T-cell (primary cell): ENCODE measurements at regions of chr9 and their contacts with region 1.

Region 1: DNA sequence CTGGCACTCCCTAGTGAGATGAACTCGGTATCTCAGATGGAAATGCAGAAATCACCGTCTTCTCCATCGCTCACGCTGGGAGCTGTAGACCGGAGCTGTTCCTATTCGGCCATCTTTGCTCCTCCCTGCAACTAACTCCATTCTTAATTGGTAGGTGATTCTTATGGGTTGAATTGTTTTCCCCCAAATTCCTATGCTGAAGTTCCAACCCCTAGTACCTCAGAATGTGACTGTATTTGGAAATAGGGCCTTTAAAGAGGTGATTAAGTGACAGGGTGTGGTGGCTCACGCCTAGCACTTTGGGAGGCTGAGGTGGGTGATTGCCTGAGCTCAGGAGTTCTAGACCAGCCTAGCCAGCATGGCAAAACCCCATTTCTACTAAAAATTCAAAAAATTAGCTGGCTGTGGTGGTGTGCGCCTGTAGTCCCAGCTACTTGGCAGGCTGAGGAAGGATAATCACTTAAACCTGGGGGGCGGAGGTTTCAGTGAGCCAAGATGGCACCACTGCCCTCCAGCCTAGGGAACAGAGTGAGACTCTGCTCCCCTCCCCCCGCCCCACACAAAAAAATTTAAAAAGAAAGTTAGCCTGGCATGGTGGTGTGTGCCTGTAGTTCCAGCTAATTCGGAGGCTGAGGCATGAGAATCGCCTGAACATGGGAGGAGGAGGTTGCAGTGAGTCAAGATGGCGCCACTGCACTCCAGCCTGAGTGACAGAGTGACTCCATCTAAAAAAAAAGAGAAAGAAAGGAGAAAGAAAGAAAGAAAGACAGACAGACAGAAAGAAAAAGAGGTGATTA is 25.2 kb upstream of the FOCAD start:
- DNase-seq: peak in 2 of 35 experiments; percentile 1 to 13
- ATAC-seq: peak in 2 of 4 experiments; percentile 32 to 40
- H3K4me3 ChIP-seq: peak overlapping the region; percentile 45 to 59
- H3K4me3 Mint-ChIP-seq: peak overlapping the region in 1 of 3 donors; percentile 89
- H3K27ac ChIP-seq: no peak overlapping the region
- H3K27ac Mint-ChIP-seq: peak overlapping the region; percentile 75 to 77
- H3K4me1 ChIP-seq: peaks cover 7 to 11% of the 10 kb centered on the region in 2 experiments
- H3K4me1 Mint-ChIP-seq: peaks cover 11 to 15% (median 14%) of the 10 kb centered on the region in 3 donors
- H3K27me3 ChIP-seq: peaks cover 0 to 5% of the 10 kb centered on the region in 2 experiments
- H3K27me3 Mint-ChIP-seq: peaks cover 0 to 2% of the 10 kb centered on the region in 2 donors

Region 2: GRCh38 chr9:19689328-19690101 is 969.4 kb before region 1 on chr9:
- CTCF ChIA-PET with region 1: no interaction called
- POLR2A ChIA-PET with region 1: no interaction called
- DNase-seq: no peak
- ATAC-seq: no peak
- H3K4me3 ChIP-seq: no peak overlapping the region
- H3K4me3 Mint-ChIP-seq: no peak overlapping the region
- H3K27ac ChIP-seq: no peak overlapping the region
- H3K27ac Mint-ChIP-seq: no peak overlapping the region
- H3K4me1 ChIP-seq: no peaks in the 10 kb centered on the region
- H3K4me1 Mint-ChIP-seq: no peaks in the 10 kb centered on the region
- H3K27me3 ChIP-seq: no peaks in the 10 kb centered on the region
- H3K27me3 Mint-ChIP-seq: peaks cover 1 to 8% of the 10 kb centered on the region in 2 donors

Region 3: DNA sequence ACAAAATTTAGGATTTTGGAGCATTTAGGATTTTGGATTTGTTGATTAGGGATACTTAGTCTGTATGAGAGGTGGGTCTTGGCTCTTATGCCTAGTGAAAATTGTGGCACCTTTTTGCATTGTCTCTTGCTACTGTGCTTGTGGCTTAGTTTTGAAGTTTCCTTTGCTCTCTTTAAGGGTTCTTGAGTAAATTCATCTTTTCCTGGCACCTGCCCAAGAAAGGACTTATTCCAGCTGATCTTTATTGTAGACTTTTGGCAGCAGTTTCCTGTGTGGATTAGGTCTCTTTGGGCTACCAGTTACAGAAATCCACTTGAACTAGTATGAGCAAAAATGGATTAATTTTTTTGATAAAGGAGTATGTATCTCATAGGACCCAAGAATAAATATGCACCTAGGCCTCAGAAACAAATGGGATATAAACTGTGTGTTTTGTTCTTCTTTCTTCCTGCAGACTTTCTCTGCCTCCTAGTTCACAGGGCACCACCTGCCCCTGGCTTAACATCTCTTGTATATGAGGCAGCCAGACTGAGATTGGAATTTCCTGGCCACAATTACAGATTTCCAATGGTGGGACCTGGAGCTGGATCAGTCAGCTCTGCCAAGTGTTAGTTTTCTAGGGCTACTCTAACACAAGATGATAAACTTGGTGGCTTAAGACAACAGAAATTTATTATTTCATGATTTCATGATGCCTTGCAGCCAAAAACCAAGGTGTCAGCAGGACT is 69.8 kb after region 1 on chr9:
- CTCF ChIA-PET with region 1: no interaction called
- POLR2A ChIA-PET with region 1: no interaction called
- DNase-seq: no peak
- ATAC-seq: no peak
- H3K4me3 ChIP-seq: no peak overlapping the region
- H3K4me3 Mint-ChIP-seq: no peak overlapping the region
- H3K27ac ChIP-seq: no peak overlapping the region
- H3K27ac Mint-ChIP-seq: no peak overlapping the region
- H3K4me1 ChIP-seq: peaks cover 0 to 6% of the 10 kb centered on the region in 2 experiments
- H3K4me1 Mint-ChIP-seq: peaks cover 16 to 26% (median 21%) of the 10 kb centered on the region in 3 donors
- H3K27me3 ChIP-seq: no peaks in the 10 kb centered on the region
- H3K27me3 Mint-ChIP-seq: no peaks in the 10 kb centered on the region

Region 4: GRCh38 chr9:21919377-21920362 is 1260.8 kb after region 1 on chr9:
- CTCF ChIA-PET with region 1: no interaction called
- POLR2A ChIA-PET with region 1: interaction called in 1 of 2 experiments, 16 read pairs
- DNase-seq: peak in 30 of 35 experiments; percentile 2 to 77 (median 31)
- ATAC-seq: peak; percentile 77 to 91 (median 83)
- H3K4me3 ChIP-seq: no peak overlapping the region
- H3K4me3 Mint-ChIP-seq: peak overlapping the region; percentile 19 to 53 (median 26)
- H3K27ac ChIP-seq: peak overlapping the region; percentile 71
- H3K27ac Mint-ChIP-seq: peak overlapping the region; percentile 75 to 85
- H3K4me1 ChIP-seq: peaks cover 5 to 13% of the 10 kb centered on the region in 2 experiments
- H3K4me1 Mint-ChIP-seq: peaks cover 29 to 35% (median 29%) of the 10 kb centered on the region in 3 donors
- H3K27me3 ChIP-seq: no peaks in the 10 kb centered on the region
- H3K27me3 Mint-ChIP-seq: no peaks in the 10 kb centered on the region